Naive thymus-derived CD4-positive, alpha-beta T cell (primary cell): ENCODE measurements at regions of chr5 and their contacts with region 1.

Region 1: DNA sequence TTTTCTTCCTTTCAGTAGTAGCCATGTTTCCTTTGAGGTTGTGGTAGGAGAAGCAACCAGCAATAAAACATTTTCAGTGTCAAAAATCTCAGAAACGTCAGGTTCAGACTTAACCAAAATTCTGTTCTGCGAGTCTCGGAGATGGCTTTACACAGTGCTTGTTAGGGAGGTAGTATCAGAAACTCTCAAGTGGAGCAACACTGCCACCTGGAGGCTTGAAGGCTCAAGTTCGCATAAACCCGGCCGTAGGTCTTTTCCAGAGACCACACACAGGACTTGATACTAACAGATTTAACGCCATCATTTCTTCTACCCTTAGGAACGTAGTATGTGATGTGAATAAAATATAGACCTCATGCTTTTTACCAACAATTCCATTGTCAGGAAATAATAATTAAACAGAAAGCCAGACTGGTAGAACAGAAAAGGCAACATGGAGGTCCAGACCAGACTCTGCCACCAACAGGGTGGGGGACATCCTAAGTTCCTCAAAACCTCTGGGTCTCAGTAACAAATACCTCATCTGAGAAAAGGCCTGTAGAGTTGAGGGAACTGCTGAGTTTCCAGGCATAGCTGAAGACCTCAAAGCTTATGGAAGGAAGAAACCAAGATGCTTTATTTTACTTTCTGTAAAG is 8.5 kb downstream of the PTGER4 start:
- DNase-seq: peak; percentile 58 to 88 (median 83)
- ATAC-seq: peak; percentile 88
- H3K4me3 ChIP-seq: peak overlapping the region; percentile 38
- H3K4me3 Mint-ChIP-seq: peak overlapping the region; percentile 76 to 100 (median 95)
- H3K27ac ChIP-seq: peak overlapping the region; percentile 60
- H3K27ac Mint-ChIP-seq: peak overlapping the region; percentile 87 to 98 (median 96)
- H3K4me1 ChIP-seq: peaks cover 30 to 32% of the 10 kb centered on the region in 2 donors
- H3K4me1 Mint-ChIP-seq: peaks cover 60 to 90% (median 82%) of the 10 kb centered on the region in 7 donors
- H3K27me3 ChIP-seq: no peaks in the 10 kb centered on the region
- H3K27me3 Mint-ChIP-seq: no peaks in the 10 kb centered on the region

Region 2: DNA sequence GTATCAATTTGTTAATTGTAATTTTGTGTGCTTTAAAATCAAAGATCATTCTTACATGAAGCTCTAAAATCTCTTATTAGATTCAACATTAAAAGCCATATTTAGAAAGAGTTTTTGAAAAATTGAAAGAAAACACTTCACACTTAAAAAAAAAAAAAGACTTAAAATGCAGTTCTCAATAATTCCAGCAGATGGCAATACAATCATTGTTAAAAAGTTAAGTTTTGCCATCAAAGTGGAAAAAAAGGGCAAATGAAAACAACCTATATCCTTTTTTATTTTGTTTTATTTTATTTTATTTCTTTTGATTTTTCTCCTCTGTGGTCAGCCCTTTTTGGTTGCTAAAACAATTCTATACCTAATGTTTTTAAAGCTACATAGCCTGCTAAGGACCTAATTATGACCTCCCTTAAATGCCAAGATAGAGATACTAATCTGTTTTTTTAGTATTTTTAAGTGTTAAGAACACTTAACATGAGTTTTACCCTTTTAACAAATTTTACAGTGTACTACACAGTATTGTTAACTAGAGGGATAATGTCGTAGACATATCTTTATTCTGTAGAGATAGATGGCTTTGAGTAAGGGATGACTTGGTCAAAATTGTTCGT is 1109.3 kb before region 1 on chr5:
- CTCF ChIA-PET with region 1: interaction called, 3 read pairs
- POLR2A ChIA-PET with region 1: no interaction called
- intact Hi-C with region 1: loop called (anchors 1 to 2 kb)
- DNase-seq: peak in 6 of 9 donors; percentile 2 to 31 (median 18)
- ATAC-seq: no peak
- H3K4me3 ChIP-seq: no peak overlapping the region
- H3K4me3 Mint-ChIP-seq: no peak overlapping the region
- H3K27ac ChIP-seq: no peak overlapping the region
- H3K27ac Mint-ChIP-seq: no peak overlapping the region
- H3K4me1 ChIP-seq: peaks cover 0 to 9% of the 10 kb centered on the region in 2 donors
- H3K4me1 Mint-ChIP-seq: peaks cover 6 to 17% (median 8%) of the 10 kb centered on the region in 7 donors
- H3K27me3 ChIP-seq: no peaks in the 10 kb centered on the region
- H3K27me3 Mint-ChIP-seq: peaks cover 0 to 23% (median 0%) of the 10 kb centered on the region in 5 donors

Region 3: DNA sequence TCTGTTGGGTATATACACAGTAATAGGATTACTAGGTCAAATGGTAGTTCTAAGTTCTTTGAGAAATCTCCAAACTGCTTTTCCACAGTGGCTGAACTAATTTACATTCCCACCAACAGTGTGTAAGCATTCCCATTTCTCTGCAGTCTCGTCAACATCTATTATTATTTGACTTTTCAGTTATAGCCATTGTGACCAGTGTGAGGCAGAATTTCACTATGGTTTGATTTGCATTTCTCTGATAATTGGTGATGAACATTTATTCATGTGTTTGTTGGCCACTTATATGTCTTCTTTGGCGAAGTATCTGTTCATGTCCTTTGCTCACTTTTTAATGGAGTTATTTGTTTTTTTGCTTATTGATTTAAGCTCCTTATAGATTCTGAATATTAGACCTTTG is 667.2 kb before region 1 on chr5:
- CTCF ChIA-PET with region 1: no interaction called
- POLR2A ChIA-PET with region 1: no interaction called
- intact Hi-C with region 1: loop called (anchors 1 to 2 kb)
- DNase-seq: no peak
- ATAC-seq: no peak
- H3K4me3 ChIP-seq: no peak overlapping the region
- H3K4me3 Mint-ChIP-seq: no peak overlapping the region
- H3K27ac ChIP-seq: no peak overlapping the region
- H3K27ac Mint-ChIP-seq: no peak overlapping the region
- H3K4me1 ChIP-seq: no peaks in the 10 kb centered on the region
- H3K4me1 Mint-ChIP-seq: peaks cover 0 to 4% (median 0%) of the 10 kb centered on the region in 7 donors
- H3K27me3 ChIP-seq: no peaks in the 10 kb centered on the region
- H3K27me3 Mint-ChIP-seq: peaks cover 0 to 11% (median 4%) of the 10 kb centered on the region in 5 donors

Region 4: DNA sequence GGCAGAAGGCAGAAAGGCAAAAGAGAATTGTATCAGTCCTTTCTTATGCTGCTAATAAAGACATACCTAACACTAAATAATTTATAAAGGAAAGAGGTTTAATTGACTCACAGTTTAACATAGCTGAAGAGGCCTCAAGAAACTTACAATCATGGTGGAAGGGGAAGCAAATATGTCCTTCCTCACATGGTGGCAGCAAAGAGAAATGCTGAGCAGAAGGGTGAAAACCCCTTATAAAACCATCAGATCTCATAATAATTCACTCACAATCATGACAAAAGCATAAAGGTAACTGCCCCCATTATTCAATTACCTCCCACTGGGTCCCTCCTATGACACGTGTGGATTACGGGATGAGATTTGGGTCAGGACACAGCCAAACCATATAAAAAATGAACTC is 321.0 kb before region 1 on chr5:
- CTCF ChIA-PET with region 1: interaction called, 3 read pairs
- POLR2A ChIA-PET with region 1: no interaction called
- intact Hi-C with region 1: loop called in 1 of 2 experiments (anchors 1 kb)
- DNase-seq: peak in 7 of 9 donors; percentile 18 to 53 (median 38)
- ATAC-seq: peak; percentile 54
- H3K4me3 ChIP-seq: no peak overlapping the region
- H3K4me3 Mint-ChIP-seq: no peak overlapping the region
- H3K27ac ChIP-seq: no peak overlapping the region
- H3K27ac Mint-ChIP-seq: peak overlapping the region in 6 of 9 donors; percentile 19 to 86 (median 66)
- H3K4me1 ChIP-seq: peaks cover 0 to under 1% of the 10 kb centered on the region in 2 donors
- H3K4me1 Mint-ChIP-seq: peaks cover 0 to 17% (median 8%) of the 10 kb centered on the region in 7 donors
- H3K27me3 ChIP-seq: no peaks in the 10 kb centered on the region
- H3K27me3 Mint-ChIP-seq: no peaks in the 10 kb centered on the region

Region 5: DNA sequence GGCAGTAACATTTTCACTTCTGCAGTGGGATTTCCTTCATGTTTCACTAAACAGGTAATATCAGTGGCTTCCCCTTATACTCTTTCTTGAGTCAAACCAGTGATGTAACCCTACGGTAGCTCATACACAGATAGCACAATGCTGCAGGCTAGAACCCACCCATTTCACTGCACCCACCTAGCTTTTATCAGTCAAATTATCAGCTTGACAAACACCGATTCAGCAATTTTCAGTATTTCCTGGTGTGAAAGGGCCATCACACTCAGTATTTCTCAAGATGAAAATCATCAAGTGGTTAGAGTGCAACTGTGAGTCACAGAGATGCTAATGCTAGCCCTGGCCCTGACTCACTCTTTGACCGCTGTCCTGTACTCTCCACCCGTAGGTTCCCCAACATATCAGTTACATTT is 250.8 kb before region 1 on chr5:
- CTCF ChIA-PET with region 1: interaction called, 3 read pairs
- POLR2A ChIA-PET with region 1: interaction called, 3 read pairs
- intact Hi-C with region 1: loop called (anchors 2 kb)
- DNase-seq: peak in 1 of 9 donors; percentile 7
- ATAC-seq: peak; percentile 67
- H3K4me3 ChIP-seq: peak overlapping the region; percentile 24
- H3K4me3 Mint-ChIP-seq: peak overlapping the region in 6 of 10 donors; percentile 10 to 75 (median 38)
- H3K27ac ChIP-seq: peak overlapping the region; percentile 79
- H3K27ac Mint-ChIP-seq: peak overlapping the region; percentile 71 to 96 (median 91)
- H3K4me1 ChIP-seq: peaks cover 34 to 39% of the 10 kb centered on the region in 2 donors
- H3K4me1 Mint-ChIP-seq: peaks cover 23 to 82% (median 68%) of the 10 kb centered on the region in 7 donors
- H3K27me3 ChIP-seq: no peaks in the 10 kb centered on the region
- H3K27me3 Mint-ChIP-seq: no peaks in the 10 kb centered on the region

Region 6: DNA sequence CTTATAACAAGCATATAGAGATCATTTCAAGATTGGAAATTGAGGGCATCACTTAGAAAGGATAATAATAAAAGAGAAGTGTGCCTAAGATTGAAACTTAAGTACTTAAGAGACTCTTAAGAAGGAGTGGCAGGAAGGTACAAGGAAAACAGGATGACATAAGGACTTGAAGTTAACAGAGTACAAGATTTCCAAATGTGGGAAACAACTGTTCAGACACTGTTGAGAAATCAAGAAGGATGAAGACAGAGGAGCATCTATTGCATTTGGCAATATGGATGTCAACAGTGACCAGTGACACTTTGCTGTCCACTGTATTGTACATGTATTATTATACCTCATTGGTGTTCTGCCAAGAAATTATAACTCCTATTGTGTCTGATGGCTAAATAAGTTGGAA is 166.3 kb before region 1 on chr5:
- CTCF ChIA-PET with region 1: no interaction called
- POLR2A ChIA-PET with region 1: no interaction called
- intact Hi-C with region 1: no loop called
- DNase-seq: no peak
- ATAC-seq: no peak
- H3K4me3 ChIP-seq: no peak overlapping the region
- H3K4me3 Mint-ChIP-seq: no peak overlapping the region
- H3K27ac ChIP-seq: no peak overlapping the region
- H3K27ac Mint-ChIP-seq: no peak overlapping the region
- H3K4me1 ChIP-seq: no peaks in the 10 kb centered on the region
- H3K4me1 Mint-ChIP-seq: peaks cover 2 to 19% (median 15%) of the 10 kb centered on the region in 7 donors
- H3K27me3 ChIP-seq: no peaks in the 10 kb centered on the region
- H3K27me3 Mint-ChIP-seq: no peaks in the 10 kb centered on the region

Region 7: DNA sequence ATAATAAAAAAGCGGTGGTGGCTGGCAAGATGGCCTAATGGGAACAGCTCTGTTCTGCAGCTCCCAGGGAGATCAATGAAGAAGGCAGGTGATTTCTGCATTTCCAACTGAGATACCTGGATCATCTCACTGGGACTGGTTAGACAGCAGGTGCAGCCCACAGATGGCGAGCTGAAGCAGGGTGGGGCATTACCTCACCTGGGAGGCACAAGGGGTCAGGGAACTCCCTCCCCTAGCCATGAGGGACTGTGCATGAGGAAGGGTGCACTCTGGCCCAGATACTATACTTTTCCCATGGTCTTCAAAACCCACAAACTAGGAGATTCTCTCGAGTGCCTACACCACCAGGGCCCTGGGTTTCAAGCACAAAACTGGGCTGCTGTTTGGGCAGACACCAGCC is 54.1 kb before region 1 on chr5:
- CTCF ChIA-PET with region 1: no interaction called
- POLR2A ChIA-PET with region 1: no interaction called
- intact Hi-C with region 1: no loop called
- DNase-seq: no peak
- ATAC-seq: no peak
- H3K4me3 ChIP-seq: no peak overlapping the region
- H3K4me3 Mint-ChIP-seq: no peak overlapping the region
- H3K27ac ChIP-seq: no peak overlapping the region
- H3K27ac Mint-ChIP-seq: no peak overlapping the region
- H3K4me1 ChIP-seq: no peaks in the 10 kb centered on the region
- H3K4me1 Mint-ChIP-seq: peaks cover 5 to 7% (median 6%) of the 10 kb centered on the region in 7 donors
- H3K27me3 ChIP-seq: no peaks in the 10 kb centered on the region
- H3K27me3 Mint-ChIP-seq: no peaks in the 10 kb centered on the region

Region 8: DNA sequence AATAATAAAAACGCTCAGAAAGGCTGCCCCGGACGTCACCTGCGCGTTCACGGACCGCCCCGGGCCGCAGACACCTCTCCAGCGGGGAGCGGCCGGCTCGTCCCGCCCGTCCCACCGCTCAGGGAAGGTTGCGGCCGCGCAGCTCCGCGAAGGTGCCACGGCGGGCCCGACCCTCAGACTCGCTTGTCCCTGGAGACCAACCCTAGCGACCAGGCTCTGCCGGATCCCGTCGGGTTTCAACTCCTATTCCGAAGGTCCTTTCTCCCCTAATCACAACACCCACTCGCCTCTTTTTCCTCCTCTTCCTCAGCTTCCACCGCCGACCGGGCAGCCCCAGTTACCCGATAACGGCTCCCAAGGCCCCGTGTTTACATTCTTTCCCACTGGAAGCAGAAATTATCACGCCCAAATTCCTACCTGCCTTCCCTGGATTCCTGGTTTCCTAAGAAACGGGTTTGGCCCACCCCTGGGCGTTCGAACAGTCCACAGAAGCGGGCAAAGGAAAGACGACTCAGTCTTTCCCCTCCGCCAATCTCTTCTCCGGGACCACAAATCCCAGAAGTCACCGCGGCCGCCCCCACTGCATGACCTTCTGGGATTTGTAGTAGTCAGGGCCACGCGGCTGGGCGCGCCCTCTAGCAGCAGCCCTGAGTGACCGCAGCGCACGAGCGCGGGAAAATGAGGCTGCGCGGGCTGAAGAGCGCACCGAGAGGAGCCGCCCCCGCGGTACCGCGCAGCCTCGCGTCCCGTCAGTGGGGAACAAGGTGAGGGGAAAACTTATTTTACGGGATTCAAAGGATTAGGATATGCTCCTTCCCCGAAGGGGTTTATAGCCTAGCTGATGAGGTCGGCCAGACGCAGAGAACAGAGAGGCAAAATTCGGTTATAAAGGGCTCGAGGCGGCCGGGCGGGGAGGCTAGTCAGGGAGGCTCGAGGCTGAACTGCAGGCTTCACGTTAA is 67.4 kb after region 1 on chr5 and contains the start of gene TTC33:
- CTCF ChIA-PET with region 1: no interaction called
- POLR2A ChIA-PET with region 1: interaction called, 3 read pairs
- intact Hi-C with region 1: loop called in 1 of 2 experiments (anchors 2 kb)
- DNase-seq: peak; percentile 84 to 95 (median 91)
- ATAC-seq: peak; percentile 95
- H3K4me3 ChIP-seq: peak within 1 kb of the TSS; percentile 95
- H3K4me3 Mint-ChIP-seq: no peak within 1 kb of the TSS
- H3K27ac ChIP-seq: peak within 1 kb of the TSS; percentile 89
- H3K27ac Mint-ChIP-seq: peak within 1 kb of the TSS in 1 of 9 donors; percentile 32
- H3K4me1 ChIP-seq: peaks cover 9 to 11% of the 10 kb centered on the region in 2 donors
- H3K4me1 Mint-ChIP-seq: peaks cover 0 to 34% (median 17%) of the 10 kb centered on the region in 7 donors
- H3K27me3 ChIP-seq: no peaks in the 10 kb centered on the region
- H3K27me3 Mint-ChIP-seq: no peaks in the 10 kb centered on the region
- total RNA-seq, gene TTC33: 7.0 to 17.2 (median 14.0) TPM